ENCODE measurements at regions of chr21 and their contacts with region 1.

Region 1: DNA sequence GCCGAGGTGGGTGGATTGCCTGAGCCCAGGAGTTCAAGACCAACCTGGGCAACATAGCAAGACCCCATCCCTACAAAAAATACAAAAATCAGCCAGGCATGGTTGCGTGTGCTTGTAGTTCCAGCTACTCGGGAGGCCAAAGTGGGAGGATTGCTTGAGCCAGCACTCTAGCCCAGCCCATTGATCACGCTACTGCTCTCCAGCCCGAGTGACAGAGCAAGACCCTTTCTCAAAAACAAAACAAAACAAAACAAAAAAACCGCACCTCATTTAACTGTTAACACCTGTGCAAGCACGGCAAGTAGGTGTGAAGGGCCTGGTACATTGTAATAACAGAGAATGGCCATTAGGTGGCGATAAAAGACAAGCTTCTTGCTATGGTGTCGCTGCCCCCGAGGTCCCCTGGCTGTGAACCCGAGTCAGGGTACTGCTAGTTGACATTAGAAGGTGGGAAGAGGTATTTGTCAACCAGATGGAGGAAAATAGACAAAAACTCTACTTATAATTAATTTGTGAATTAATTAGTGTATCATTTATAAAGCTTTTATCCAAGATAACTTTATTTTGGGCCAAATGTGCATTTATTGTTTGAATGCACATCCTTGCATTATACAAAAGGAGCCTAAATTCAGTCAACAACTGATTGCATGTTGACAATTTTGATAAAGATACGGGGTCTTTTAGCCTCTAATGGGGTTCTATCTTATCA is 66.5 kb downstream of the SH3BGR start:
- DNase-seq: peak; percentile 32
- ATAC-seq: peak; percentile 94
- H3K4me3 ChIP-seq: no peak overlapping the region
- H3K27ac ChIP-seq: no peak overlapping the region
- H3K4me1 ChIP-seq: no peaks in the 10 kb centered on the region
- H3K27me3 ChIP-seq: no peaks in the 10 kb centered on the region; the same call in 1 of the 2 replicates
- CTCF ChIP-seq: peak; percentile 84
- POLR2A ChIP-seq: no peak
- RAD21 ChIP-seq: peak; percentile 93

Region 2: GRCh38 chr21:39422527-39423241 is 95.6 kb before region 1 on chr21:
- CTCF ChIA-PET with region 1: no interaction called
- POLR2A ChIA-PET with region 1: no interaction called
- dilution Hi-C with region 1: no loop called
- in situ Hi-C with region 1: no loop called
- intact Hi-C with region 1: no loop called
- DNase-seq: no peak
- ATAC-seq: no peak
- H3K4me3 ChIP-seq: no peak overlapping the region
- H3K27ac ChIP-seq: no peak overlapping the region
- H3K4me1 ChIP-seq: no peaks in the 10 kb centered on the region
- H3K27me3 ChIP-seq: no peaks in the 10 kb centered on the region
- CTCF ChIP-seq: no peak
- POLR2A ChIP-seq: no peak
- RAD21 ChIP-seq: no peak

Region 3: DNA sequence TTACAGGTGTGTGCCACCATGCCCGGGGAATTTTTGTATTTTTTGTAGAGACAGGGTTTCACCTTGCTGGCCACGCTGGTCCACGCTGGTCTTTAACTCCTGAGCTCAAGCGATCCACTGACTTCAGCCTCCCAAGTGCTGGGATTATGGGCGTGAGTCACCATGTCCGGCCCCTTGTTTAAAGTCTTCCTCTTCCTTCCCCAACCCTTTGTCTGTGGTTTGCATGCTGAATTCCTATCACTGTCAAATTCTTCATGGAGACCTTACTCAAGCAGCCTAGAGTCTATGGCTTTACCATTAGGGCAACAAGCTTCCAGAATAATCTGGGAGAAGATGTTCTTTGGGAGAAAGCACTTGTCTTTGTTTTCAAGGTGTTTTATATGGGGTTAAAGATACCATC is 129.2 kb after region 1 on chr21:
- CTCF ChIA-PET with region 1: no interaction called
- POLR2A ChIA-PET with region 1: interaction called, 10 read pairs
- dilution Hi-C with region 1: no loop called
- in situ Hi-C with region 1: no loop called
- intact Hi-C with region 1: no loop called
- DNase-seq: peak; percentile 63
- ATAC-seq: peak; percentile 32; the same call in 1 of the 2 replicates
- H3K4me3 ChIP-seq: no peak overlapping the region
- H3K27ac ChIP-seq: no peak overlapping the region
- H3K4me1 ChIP-seq: no peaks in the 10 kb centered on the region
- H3K27me3 ChIP-seq: peaks cover 4% of the 10 kb centered on the region; the same call in 1 of the 2 replicates
- CTCF ChIP-seq: no peak
- POLR2A ChIP-seq: no peak
- RAD21 ChIP-seq: no peak

Region 4: DNA sequence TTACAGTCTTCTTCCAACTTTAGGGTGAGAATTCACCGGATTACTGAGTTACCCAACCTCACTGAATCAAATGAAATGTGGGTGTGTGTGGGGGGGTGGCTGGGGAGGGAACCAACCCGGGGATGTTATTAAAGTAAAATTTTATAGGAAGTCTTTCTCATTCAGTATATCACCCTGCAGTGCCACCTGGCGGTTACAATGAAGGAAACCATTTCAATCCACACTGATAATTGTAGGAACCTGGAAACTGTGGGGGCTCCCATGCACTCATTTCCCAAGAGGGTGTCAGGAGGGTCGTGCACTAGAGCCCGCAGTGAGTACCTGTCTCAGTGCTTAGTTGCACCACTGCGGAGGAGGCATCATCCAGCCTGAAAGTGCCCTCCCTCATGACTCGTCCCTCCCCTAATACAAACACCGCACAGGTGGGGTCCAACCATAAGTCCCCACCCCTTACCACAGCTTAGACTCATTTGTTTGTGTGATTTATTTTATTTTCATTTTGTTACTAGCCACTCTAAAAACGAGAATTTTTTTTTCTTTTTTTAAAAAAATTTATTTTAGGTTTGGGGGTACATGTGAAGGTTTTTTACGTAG is 197.6 kb after region 1 on chr21:
- CTCF ChIA-PET with region 1: interaction called, 7 read pairs
- POLR2A ChIA-PET with region 1: no interaction called
- dilution Hi-C with region 1: loop called (anchors 25 kb)
- in situ Hi-C with region 1: loop called (anchors 5 kb)
- intact Hi-C with region 1: loop called (anchors 1 kb)
- DNase-seq: peak; percentile 32
- ATAC-seq: peak; percentile 66
- H3K4me3 ChIP-seq: no peak overlapping the region
- H3K27ac ChIP-seq: no peak overlapping the region
- H3K4me1 ChIP-seq: no peaks in the 10 kb centered on the region
- H3K27me3 ChIP-seq: no peaks in the 10 kb centered on the region
- CTCF ChIP-seq: peak; percentile 63
- POLR2A ChIP-seq: no peak
- RAD21 ChIP-seq: peak; percentile 62

Region 5: DNA sequence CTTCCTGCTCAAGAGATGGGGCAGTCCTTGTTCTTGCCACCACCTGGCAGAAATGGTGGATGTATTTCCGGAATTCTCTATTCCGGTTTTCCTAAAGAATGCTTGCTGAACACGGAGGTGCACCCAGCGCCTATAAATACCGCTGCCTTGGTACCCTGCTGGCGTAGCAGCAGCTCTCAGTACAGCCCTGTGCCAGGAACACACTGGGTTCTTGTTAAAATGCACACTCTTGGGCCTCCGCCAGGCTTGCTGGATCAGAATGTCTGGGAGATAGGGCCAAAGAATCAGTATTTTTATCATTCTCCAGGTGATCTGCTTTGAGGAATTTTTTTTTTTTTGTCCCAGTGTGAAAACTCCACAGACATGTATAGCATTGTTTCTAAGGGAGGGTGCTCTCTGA is 280.9 kb after region 1 on chr21:
- CTCF ChIA-PET with region 1: no interaction called
- POLR2A ChIA-PET with region 1: no interaction called
- dilution Hi-C with region 1: no loop called
- in situ Hi-C with region 1: no loop called
- intact Hi-C with region 1: no loop called
- DNase-seq: no peak
- ATAC-seq: no peak
- H3K4me3 ChIP-seq: no peak overlapping the region
- H3K27ac ChIP-seq: no peak overlapping the region
- H3K4me1 ChIP-seq: no peaks in the 10 kb centered on the region
- H3K27me3 ChIP-seq: no peaks in the 10 kb centered on the region
- CTCF ChIP-seq: no peak
- POLR2A ChIP-seq: no peak
- RAD21 ChIP-seq: no peak

Region 6: GRCh38 chr21:41133896-41134522 is 1615.7 kb after region 1 on chr21:
- CTCF ChIA-PET with region 1: no interaction called
- POLR2A ChIA-PET with region 1: no interaction called
- dilution Hi-C with region 1: no loop called
- in situ Hi-C with region 1: no loop called
- intact Hi-C with region 1: loop called (anchors 5 kb)
- DNase-seq: peak; percentile 54
- ATAC-seq: peak; percentile 86
- H3K4me3 ChIP-seq: no peak overlapping the region
- H3K27ac ChIP-seq: no peak overlapping the region
- H3K4me1 ChIP-seq: no peaks in the 10 kb centered on the region
- H3K27me3 ChIP-seq: no peaks in the 10 kb centered on the region; the same call in 1 of the 2 replicates
- CTCF ChIP-seq: peak; percentile 48
- POLR2A ChIP-seq: no peak
- RAD21 ChIP-seq: peak; percentile 41

Measured in IMR-90 (cell line).